ENCODE measurements at regions of chr1 and their contacts with region 1.

Region 1: DNA sequence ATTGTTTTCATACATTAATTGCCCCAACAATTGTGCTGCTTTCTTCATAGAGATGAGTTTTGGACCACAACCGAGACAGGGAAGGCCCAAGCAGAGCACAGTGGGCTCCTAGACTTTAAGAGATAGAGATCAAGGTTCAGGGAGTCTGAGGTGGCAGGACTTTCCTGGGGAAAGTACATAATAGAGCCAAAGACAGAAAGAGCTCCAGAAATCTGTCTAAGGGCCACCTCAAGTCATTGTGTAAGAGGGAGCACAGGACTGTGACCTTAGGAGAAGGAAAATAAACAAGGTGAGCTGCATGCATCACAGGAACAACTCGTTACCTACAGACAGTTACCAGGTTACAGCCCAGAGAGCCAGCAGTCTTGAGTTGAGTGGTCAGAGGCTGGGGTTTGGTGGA is 41.3 kb upstream of the CR2 start:
- DNase-seq: no peak
- H3K4me3 Mint-ChIP-seq: no peak overlapping the region
- H3K27ac Mint-ChIP-seq: peak overlapping the region; percentile 52
- H3K4me1 Mint-ChIP-seq: peaks cover 44% of the 10 kb centered on the region
- H3K27me3 Mint-ChIP-seq: peaks cover 2% of the 10 kb centered on the region

Region 2: DNA sequence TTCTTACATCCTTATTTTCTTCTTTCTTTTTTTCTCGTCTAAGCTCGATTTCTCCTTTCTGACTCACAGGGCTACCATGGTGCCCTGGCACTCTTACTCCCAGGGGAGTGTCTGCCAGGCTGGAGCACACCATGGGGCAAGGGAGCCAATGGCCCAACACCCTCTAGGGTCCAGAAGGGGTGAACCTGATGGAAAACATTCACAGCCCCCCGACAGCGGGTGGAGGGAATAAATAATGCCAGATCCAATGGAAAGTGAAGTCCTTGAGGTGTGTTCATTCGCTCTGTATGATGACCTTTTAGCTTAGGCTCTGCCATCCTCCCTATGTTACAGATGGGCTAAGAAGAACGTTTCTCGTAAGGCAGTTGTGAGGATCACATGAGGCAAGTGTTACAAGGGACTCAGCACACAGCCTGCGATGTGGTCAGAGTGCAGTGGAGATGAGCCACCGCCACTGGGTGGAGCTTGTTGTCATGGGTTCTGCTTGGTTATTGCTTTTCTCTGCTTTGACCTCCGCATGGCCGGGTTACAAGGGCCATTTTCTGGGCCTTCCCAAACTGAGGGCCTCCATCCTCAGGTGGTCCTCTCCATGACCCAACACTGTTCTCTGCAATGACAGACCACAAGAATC is 487.6 kb before region 1 on chr1:
- CTCF ChIA-PET with region 1: no interaction called
- intact Hi-C with region 1: loop called (anchors 1 kb)
- DNase-seq: peak; percentile 78
- H3K4me3 Mint-ChIP-seq: no peak overlapping the region
- H3K27ac Mint-ChIP-seq: no peak overlapping the region
- H3K4me1 Mint-ChIP-seq: peaks cover 24% of the 10 kb centered on the region
- H3K27me3 Mint-ChIP-seq: no peaks in the 10 kb centered on the region

Region 3: GRCh38 chr1:207084701-207085180 is 328.1 kb before region 1 on chr1:
- CTCF ChIA-PET with region 1: interaction called, 70 read pairs
- intact Hi-C with region 1: loop called (anchors 2 kb)
- DNase-seq: peak; percentile 73
- H3K4me3 Mint-ChIP-seq: no peak overlapping the region
- H3K27ac Mint-ChIP-seq: no peak overlapping the region
- H3K4me1 Mint-ChIP-seq: peaks cover 23% of the 10 kb centered on the region
- H3K27me3 Mint-ChIP-seq: no peaks in the 10 kb centered on the region

Region 4: GRCh38 chr1:207362962-207363858 is 49.6 kb before region 1 on chr1:
- CTCF ChIA-PET with region 1: no interaction called
- intact Hi-C with region 1: loop called (anchors 1 kb)
- DNase-seq: peak; percentile 39
- H3K4me3 Mint-ChIP-seq: no peak overlapping the region
- H3K27ac Mint-ChIP-seq: no peak overlapping the region
- H3K4me1 Mint-ChIP-seq: peaks cover 5% of the 10 kb centered on the region
- H3K27me3 Mint-ChIP-seq: no peaks in the 10 kb centered on the region

Region 5: GRCh38 chr1:207393610-207394009 is 19.2 kb before region 1 on chr1:
- CTCF ChIA-PET with region 1: no interaction called
- intact Hi-C with region 1: loop called (anchors 1 kb)
- DNase-seq: no peak
- H3K4me3 Mint-ChIP-seq: no peak overlapping the region
- H3K27ac Mint-ChIP-seq: no peak overlapping the region
- H3K4me1 Mint-ChIP-seq: peaks cover 20% of the 10 kb centered on the region
- H3K27me3 Mint-ChIP-seq: peaks cover 2% of the 10 kb centered on the region

Region 6: DNA sequence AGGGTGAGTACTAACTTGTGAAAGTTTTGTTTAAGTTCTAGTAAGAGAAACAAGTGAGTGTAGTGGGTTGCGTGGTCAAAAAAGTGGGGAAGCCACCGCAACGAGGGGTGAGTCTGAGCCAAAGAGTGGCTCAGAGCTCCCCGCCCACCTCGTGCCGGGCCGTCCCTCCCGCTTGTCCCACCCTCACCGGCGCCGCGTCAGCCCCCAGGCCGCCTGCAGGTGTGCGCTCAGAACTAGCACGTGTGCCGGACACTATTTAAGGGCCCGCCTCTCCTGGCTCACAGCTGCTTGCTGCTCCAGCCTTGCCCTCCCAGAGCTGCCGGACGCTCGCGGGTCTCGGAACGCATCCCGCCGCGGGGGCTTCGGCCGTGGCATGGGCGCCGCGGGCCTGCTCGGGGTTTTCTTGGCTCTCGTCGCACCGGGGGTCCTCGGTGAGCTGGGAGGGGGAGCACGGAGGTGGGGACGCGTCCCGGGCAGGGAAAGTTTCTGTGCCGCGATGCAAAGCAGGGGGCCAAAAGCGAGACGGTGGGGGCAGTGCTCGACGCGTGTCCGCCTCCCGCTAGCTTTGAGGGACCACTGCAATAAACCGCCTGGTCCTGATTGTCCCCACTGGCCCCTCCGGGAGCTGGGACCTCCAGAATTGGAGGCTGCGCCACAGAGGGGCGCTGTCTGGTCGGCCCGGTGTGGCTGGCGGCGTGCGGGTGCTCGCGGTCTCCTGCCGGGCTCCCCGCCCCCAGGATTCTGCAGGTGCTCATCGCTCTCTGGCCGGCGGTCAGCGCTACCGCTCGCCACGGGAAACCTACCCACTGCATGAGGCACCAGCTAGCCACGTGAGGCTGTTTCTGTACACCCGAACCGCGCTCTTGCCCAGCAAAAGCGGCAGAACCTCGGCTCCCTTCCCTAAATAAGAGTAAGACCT is 41.5 kb after region 1 on chr1 and contains the start of gene CR2:
- CTCF ChIA-PET with region 1: interaction called, 4 read pairs
- intact Hi-C with region 1: loop called (anchors 2 kb)
- DNase-seq: peak; percentile 64
- H3K4me3 Mint-ChIP-seq: peak within 1 kb of the TSS; percentile 65
- H3K27ac Mint-ChIP-seq: no peak within 1 kb of the TSS
- H3K4me1 Mint-ChIP-seq: peaks cover 7% of the 10 kb centered on the region
- H3K27me3 Mint-ChIP-seq: peaks cover 18% of the 10 kb centered on the region
- total RNA-seq, gene CR2: 0.36 to 1.8 TPM

Region 7: GRCh38 chr1:207787776-207788175 is 374.9 kb after region 1 on chr1:
- CTCF ChIA-PET with region 1: no interaction called
- intact Hi-C with region 1: no loop called
- DNase-seq: no peak
- H3K4me3 Mint-ChIP-seq: no peak overlapping the region
- H3K27ac Mint-ChIP-seq: no peak overlapping the region
- H3K4me1 Mint-ChIP-seq: no peaks in the 10 kb centered on the region
- H3K27me3 Mint-ChIP-seq: no peaks in the 10 kb centered on the region

Measured in activated naive CD4-positive, alpha-beta T cell treated with anti-CD3 and anti-CD28 coated beads for 36 hours (primary cell).